Calu3 (cell line): ENCODE measurements at regions of chr3 and their contacts with region 1.

Region 1: GRCh38 chr3:102174312-102174712 is 260.5 kb upstream of the ZPLD1 start:
- DNase-seq: peak; percentile 52
- H3K4me3 Mint-ChIP-seq: no peak overlapping the region
- H3K27ac Mint-ChIP-seq: peak overlapping the region; percentile 98
- H3K4me1 Mint-ChIP-seq: peaks cover 54% of the 10 kb centered on the region
- H3K27me3 Mint-ChIP-seq: no peaks in the 10 kb centered on the region
- CTCF ChIP-seq: no peak

Region 2: DNA sequence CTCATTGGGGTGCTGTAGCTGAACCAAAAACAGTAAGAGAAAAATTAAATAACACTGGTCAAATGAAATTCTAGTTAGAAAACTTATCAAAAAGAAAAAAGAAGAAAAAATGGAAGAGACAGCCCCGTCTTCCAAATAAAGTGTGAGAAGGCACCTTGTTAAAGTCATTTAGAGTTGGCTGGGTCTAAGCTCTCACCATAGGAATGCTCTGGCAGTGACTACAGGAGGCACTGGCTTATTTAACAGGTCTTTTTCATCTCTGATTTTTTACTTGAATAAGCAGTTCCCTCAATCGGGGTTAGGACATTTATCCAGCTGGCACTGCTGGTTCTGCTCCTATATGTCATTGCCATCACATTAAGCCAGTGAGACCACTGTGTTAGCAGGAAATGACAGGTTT is 1179.5 kb before region 1 on chr3:
- CTCF ChIA-PET with region 1: no interaction called
- intact Hi-C with region 1: no loop called
- DNase-seq: no peak
- H3K4me3 Mint-ChIP-seq: no peak overlapping the region
- H3K27ac Mint-ChIP-seq: no peak overlapping the region
- H3K4me1 Mint-ChIP-seq: no peaks in the 10 kb centered on the region
- H3K27me3 Mint-ChIP-seq: no peaks in the 10 kb centered on the region
- CTCF ChIP-seq: no peak

Region 3: DNA sequence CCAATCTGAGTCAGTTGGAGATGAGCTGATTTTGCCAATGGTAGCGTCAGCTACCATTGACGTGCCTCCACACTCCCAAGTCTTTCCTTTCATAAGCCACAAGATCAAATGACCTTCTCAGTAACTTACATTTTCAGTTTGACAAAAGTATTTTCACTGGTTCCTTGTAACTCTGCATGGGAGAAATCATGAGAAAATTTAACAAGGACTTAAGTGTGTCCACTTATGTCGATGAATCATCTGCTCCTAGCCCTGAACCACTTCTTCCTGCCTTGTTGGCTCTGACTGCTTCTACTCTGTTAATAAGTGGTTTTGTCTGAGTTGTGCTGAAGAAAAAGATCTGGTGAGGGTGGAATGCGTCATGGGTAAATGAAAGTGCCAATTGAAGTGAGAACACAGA is 223.8 kb before region 1 on chr3:
- CTCF ChIA-PET with region 1: no interaction called
- intact Hi-C with region 1: loop called (anchors 2 kb)
- DNase-seq: peak; percentile 59
- H3K4me3 Mint-ChIP-seq: peak overlapping the region; percentile 38
- H3K27ac Mint-ChIP-seq: peak overlapping the region; percentile 93
- H3K4me1 Mint-ChIP-seq: peaks cover 42% of the 10 kb centered on the region
- H3K27me3 Mint-ChIP-seq: no peaks in the 10 kb centered on the region
- CTCF ChIP-seq: no peak

Region 4: DNA sequence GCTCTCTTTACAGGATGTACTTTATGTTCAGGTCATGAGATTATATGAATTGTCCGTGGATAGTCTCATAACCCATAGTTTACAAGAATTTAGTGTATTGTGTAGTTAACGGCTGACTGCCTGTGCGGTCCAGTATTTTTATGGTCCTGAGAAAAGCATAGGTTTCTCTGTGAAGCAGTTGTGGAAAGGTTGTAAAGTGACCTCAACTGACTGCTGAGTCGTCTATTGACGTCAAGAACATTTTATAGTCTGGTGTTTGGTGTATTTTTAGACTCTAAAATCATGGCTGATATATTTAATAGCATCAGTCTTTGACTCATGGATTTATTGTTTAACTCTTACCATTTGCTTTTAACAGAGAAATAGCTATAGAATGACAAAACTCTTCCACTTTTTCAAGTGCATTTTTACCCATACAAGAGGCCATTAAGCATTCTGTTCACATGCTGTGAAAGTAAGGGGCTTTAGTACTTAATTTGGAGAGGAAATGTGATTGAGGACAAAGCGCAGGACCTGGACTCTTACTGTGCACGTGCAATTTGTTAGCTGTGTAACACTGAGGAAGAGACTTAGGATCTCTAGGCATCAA is 84.3 kb before region 1 on chr3:
- CTCF ChIA-PET with region 1: no interaction called
- intact Hi-C with region 1: no loop called
- DNase-seq: no peak
- H3K4me3 Mint-ChIP-seq: no peak overlapping the region
- H3K27ac Mint-ChIP-seq: no peak overlapping the region
- H3K4me1 Mint-ChIP-seq: peaks cover 31% of the 10 kb centered on the region
- H3K27me3 Mint-ChIP-seq: no peaks in the 10 kb centered on the region
- CTCF ChIP-seq: no peak